Cardiac septum (tissue), 1 donor: ENCODE measurements at regions of chr17 and their contacts with region 1.

Region 1: DNA sequence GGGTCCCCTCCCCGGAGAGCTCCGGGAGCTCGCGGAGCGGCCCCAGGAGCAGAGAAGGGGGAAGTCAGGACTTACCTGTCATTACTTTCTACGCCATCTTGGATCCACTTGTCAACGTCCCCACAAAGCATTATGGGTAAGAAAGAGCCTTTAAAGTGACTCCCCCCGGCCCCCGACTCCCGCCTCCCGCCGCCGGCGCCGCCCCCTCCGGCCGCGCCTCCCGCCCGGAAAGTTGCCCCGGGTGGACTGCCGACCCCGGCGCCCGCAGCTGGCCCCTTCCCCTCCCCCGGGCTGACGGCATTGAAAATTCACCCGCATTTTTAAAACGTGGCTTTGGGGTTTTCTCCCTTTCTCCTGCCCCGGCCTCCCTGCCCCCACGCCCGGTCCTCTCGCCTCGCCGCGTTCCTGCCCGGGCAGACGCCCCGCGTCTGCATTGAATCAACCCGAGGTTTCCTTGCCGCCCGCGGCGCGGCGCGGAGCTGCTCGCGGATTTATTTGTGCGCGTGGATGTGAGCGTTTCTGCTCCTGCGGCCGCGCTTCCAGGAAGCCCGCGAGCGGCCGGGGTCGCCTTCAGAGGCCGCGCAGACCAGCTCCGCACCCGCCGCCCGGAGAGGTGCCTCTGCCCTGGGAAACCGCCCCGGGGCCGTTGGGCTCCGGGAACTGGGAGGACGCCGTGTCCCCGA is at the start of gene HELZ:
- DNase-seq: peak; percentile 90
- total RNA-seq, gene HELZ: 42.6 TPM

Region 2: GRCh38 chr17:67212689-67213417 is 32.4 kb before region 1 on chr17:
- intact Hi-C with region 1: no loop called
- DNase-seq: no peak

Region 3: DNA sequence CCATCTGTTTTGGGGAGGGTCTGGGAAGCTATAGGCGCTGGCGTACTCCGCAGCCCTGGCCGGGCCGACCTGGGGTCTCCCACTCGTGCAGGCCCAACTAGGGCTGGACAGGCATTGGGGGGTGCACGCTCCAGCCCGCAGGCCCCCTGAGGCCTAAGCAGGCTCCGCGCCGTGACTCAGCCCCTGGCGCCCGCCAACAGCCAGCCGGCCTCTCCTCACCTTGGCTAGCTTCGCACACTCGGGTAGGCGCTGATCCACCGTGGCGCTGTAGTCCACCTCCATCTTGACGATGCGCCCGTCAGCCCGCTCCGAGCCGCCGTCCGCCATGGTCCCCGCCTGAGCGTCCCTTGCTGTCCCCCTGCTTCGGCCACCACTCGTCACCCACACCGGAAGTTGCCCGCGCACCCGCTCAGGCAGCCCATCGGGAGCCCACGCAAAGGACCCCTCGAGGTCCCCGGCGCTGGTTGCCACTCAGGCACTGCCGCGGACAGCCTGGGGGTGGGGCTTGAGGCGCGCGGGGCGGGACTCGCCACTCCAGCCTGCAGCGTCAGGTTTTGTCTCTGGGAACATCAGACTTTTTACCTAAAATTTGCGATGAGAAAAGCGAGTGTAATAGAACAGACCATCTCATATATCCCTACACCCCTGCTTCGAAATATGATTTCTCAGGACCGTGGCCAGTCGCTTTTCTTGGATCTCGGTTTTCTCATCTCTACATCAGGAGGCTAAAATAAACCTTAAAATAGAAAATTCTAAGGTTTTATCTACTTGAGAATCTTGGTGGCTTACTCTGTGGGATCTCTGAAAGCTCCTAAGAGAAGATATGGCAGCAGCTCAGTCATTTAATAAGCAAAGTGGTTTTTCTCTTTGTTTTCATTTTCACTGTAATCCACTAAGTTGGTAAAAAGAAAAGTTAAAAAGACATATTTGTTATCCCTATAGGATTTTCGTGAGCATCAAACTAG is 121.3 kb after region 1 on chr17 and contains the start of gene PSMD12:
- intact Hi-C with region 1: loop called (anchors 10 kb)
- DNase-seq: peak; percentile 99
- total RNA-seq, gene PSMD12: 43.4 TPM